ENCODE measurements at regions of chr21 and their contacts with region 1.

Region 1: GRCh38 chr21:34603002-34603709 is 11.8 kb downstream of the RCAN1 start:
- DNase-seq: peak; percentile 46
- ATAC-seq: peak; percentile 82
- H3K4me3 Mint-ChIP-seq: no peak overlapping the region
- H3K27ac Mint-ChIP-seq: no peak overlapping the region
- H3K4me1 Mint-ChIP-seq: no peaks in the 10 kb centered on the region
- H3K27me3 Mint-ChIP-seq: no peaks in the 10 kb centered on the region
- CTCF ChIP-seq: no peak

Region 2: DNA sequence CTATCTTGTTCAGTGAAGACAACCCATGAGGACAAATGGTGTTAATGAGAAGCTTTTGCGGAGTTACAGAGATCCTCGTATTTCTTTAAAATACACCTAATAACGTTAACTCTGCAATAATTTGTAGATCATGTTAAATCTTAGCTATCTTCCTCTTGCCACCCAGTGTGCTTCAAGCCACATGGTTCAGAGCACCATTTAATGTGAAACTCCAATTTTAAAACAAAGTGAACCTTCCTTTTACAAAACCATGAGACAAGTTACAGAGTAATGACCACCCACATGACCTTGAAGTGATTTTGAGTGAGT is 241.1 kb before region 1 on chr21:
- CTCF ChIA-PET with region 1: interaction called, 16 read pairs
- POLR2A ChIA-PET with region 1: no interaction called
- intact Hi-C with region 1: loop called (anchors 1 kb)
- DNase-seq: no peak
- ATAC-seq: peak; percentile 15
- H3K4me3 Mint-ChIP-seq: no peak overlapping the region
- H3K27ac Mint-ChIP-seq: no peak overlapping the region
- H3K4me1 Mint-ChIP-seq: peaks cover 7% of the 10 kb centered on the region
- H3K27me3 Mint-ChIP-seq: peaks cover 14% of the 10 kb centered on the region
- CTCF ChIP-seq: no peak

Region 3: DNA sequence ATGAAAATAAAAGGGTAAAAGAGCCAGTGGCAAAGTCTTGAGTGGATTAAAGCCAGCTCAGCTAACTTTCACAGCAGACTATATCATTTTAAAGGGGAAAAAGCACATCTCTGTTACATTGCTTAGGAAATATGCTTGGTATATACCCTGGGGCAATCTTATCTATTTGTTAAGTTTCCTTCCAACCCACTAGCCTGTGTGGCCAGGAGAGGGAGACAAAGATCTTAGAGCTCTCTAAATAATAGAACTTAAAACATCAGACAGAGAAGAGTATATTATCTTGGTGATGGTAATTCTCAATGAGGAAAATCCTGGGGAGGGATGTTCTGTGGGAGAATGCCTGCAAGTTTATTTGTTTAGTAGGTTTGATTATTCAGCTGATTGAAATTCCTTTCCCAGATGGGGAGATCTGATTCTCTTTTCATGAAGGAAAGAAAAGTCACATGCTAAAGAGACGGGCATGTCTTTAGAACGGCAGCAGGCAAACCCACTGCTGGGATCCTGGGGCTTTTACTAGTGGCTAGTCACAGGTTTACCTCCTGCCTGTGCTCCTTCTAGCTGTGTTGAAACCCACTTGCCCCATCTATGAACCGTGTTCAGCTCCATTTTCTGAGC is 235.7 kb before region 1 on chr21:
- CTCF ChIA-PET with region 1: interaction called, 16 read pairs
- POLR2A ChIA-PET with region 1: no interaction called
- intact Hi-C with region 1: loop called (anchors 1 kb)
- DNase-seq: no peak
- ATAC-seq: peak; percentile 81
- H3K4me3 Mint-ChIP-seq: no peak overlapping the region
- H3K27ac Mint-ChIP-seq: no peak overlapping the region
- H3K4me1 Mint-ChIP-seq: no peaks in the 10 kb centered on the region
- H3K27me3 Mint-ChIP-seq: peaks cover 11% of the 10 kb centered on the region
- CTCF ChIP-seq: no peak

Region 4: GRCh38 chr21:34510148-34511142 is 92.7 kb before region 1 on chr21:
- CTCF ChIA-PET with region 1: interaction called, 12 read pairs
- POLR2A ChIA-PET with region 1: no interaction called
- intact Hi-C with region 1: loop called (anchors 1 kb)
- DNase-seq: no peak
- ATAC-seq: peak; percentile 54
- H3K4me3 Mint-ChIP-seq: no peak overlapping the region
- H3K27ac Mint-ChIP-seq: no peak overlapping the region
- H3K4me1 Mint-ChIP-seq: no peaks in the 10 kb centered on the region
- H3K27me3 Mint-ChIP-seq: no peaks in the 10 kb centered on the region
- CTCF ChIP-seq: no peak

Region 5: DNA sequence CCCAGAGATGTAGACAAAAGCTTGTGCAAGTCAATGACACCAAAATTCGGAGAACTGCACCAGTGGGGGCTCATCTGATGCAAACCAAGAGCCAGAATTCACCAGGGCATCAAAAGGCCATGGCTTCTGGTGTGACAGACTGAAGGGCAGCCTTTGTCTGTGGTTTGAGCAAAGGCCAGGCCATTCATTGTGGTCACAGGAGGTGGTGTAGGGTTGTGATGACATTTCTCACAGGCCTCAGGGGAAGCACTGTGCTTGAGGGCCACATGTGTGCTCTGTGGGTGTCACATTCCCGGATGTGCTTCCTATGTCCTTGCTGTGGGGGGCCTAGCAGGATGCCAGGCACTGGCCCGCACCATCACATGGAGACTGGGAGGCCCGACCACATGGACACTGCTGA is 68.6 kb before region 1 on chr21:
- CTCF ChIA-PET with region 1: no interaction called
- POLR2A ChIA-PET with region 1: no interaction called
- intact Hi-C with region 1: no loop called
- DNase-seq: no peak
- ATAC-seq: no peak
- H3K4me3 Mint-ChIP-seq: no peak overlapping the region
- H3K27ac Mint-ChIP-seq: no peak overlapping the region
- H3K4me1 Mint-ChIP-seq: no peaks in the 10 kb centered on the region
- H3K27me3 Mint-ChIP-seq: no peaks in the 10 kb centered on the region
- CTCF ChIP-seq: no peak

Region 6: GRCh38 chr21:34592120-34592955 is 10.8 kb before region 1 on chr21:
- CTCF ChIA-PET with region 1: interaction called, 11 read pairs
- POLR2A ChIA-PET with region 1: no interaction called
- intact Hi-C with region 1: no loop called
- DNase-seq: no peak
- ATAC-seq: no peak
- H3K4me3 Mint-ChIP-seq: no peak overlapping the region
- H3K27ac Mint-ChIP-seq: no peak overlapping the region
- H3K4me1 Mint-ChIP-seq: no peaks in the 10 kb centered on the region
- H3K27me3 Mint-ChIP-seq: no peaks in the 10 kb centered on the region
- CTCF ChIP-seq: no peak

Region 7: DNA sequence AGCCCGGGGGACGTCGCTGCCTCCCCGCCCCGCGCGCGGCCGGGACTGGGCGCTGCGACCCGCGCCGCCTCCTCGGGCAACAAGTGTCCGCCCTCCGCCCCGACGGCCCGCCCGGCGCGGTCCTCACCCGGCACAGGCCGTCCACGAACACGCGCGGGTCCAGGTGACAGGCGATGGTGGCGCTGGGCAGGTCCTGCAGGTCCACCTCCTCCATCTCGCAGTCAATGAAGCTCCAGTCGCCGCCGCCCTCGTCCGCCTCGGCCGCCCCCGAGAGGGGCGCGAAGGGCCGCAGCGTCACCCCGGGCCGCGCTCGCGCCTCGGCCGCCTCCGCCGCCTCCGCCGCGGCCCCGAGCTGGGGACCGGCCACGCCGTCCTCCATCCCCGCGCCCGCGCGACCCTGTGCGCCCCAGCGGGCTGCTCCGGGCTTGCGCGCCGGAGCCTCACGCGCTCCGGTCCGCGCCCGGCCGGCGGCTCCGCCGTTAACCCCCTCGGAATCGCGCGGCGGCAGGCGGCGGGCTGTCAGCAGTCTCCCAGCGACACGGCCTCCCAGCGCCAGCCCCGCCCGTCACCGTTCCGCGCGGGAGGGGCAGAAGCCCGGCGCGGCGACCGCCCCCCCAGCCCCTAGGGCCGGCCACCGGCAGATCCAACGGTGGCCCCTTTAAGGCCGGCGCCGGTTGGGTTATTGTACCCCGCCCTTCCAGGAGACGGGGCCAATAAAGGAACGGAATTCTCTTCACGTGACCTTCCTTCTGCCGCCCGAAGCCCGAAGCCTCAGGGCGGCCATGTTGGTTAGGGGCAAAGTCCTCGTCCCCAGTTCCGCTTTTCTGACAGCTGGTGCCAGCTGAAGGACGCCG is 11.7 kb after region 1 on chr21 and contains the start of gene RCAN1:
- CTCF ChIA-PET with region 1: interaction called, 10 read pairs
- POLR2A ChIA-PET with region 1: no interaction called
- intact Hi-C with region 1: no loop called
- DNase-seq: peak; percentile 78
- ATAC-seq: peak; percentile 94
- H3K4me3 Mint-ChIP-seq: peak within 1 kb of the TSS; percentile 82
- H3K27ac Mint-ChIP-seq: peak within 1 kb of the TSS; percentile 82
- H3K4me1 Mint-ChIP-seq: peaks cover 7% of the 10 kb centered on the region
- H3K27me3 Mint-ChIP-seq: peaks cover 1% of the 10 kb centered on the region
- CTCF ChIP-seq: no peak
- total RNA-seq, gene RCAN1: 5.8 and 6.3 TPM in 2 replicates

Region 8: GRCh38 chr21:34630536-34631143 is 27.5 kb after region 1 on chr21:
- CTCF ChIA-PET with region 1: interaction called, 7 read pairs
- POLR2A ChIA-PET with region 1: interaction called, 3 read pairs
- intact Hi-C with region 1: loop called (anchors 2 kb)
- DNase-seq: no peak
- ATAC-seq: peak; percentile 75
- H3K4me3 Mint-ChIP-seq: no peak overlapping the region
- H3K27ac Mint-ChIP-seq: no peak overlapping the region
- H3K4me1 Mint-ChIP-seq: no peaks in the 10 kb centered on the region
- H3K27me3 Mint-ChIP-seq: peaks cover 8% of the 10 kb centered on the region
- CTCF ChIP-seq: no peak

Measured in activated B cell treated with CpG ODN at 0.5 μM for 24 hours (primary cell).